ENCODE measurements at regions of chr1 and their contacts with region 1.

Region 1: GRCh38 chr1:3856908-3857790 is at the starts of genes CEP104 and DFFB:
- H3K4me3 Mint-ChIP-seq: peak within 1 kb of the TSS; percentile 97
- H3K27ac Mint-ChIP-seq: peak within 1 kb of the TSS; percentile 88
- H3K4me1 Mint-ChIP-seq: peaks cover 37% of the 10 kb centered on the region
- H3K27me3 Mint-ChIP-seq: no peaks in the 10 kb centered on the region

Region 2: GRCh38 chr1:3727042-3727824 is 129.9 kb before region 1 on chr1:
- intact Hi-C with region 1: no loop called
- H3K4me3 Mint-ChIP-seq: no peak overlapping the region
- H3K27ac Mint-ChIP-seq: no peak overlapping the region
- H3K4me1 Mint-ChIP-seq: no peaks in the 10 kb centered on the region
- H3K27me3 Mint-ChIP-seq: peaks cover 9% of the 10 kb centered on the region

Region 3: DNA sequence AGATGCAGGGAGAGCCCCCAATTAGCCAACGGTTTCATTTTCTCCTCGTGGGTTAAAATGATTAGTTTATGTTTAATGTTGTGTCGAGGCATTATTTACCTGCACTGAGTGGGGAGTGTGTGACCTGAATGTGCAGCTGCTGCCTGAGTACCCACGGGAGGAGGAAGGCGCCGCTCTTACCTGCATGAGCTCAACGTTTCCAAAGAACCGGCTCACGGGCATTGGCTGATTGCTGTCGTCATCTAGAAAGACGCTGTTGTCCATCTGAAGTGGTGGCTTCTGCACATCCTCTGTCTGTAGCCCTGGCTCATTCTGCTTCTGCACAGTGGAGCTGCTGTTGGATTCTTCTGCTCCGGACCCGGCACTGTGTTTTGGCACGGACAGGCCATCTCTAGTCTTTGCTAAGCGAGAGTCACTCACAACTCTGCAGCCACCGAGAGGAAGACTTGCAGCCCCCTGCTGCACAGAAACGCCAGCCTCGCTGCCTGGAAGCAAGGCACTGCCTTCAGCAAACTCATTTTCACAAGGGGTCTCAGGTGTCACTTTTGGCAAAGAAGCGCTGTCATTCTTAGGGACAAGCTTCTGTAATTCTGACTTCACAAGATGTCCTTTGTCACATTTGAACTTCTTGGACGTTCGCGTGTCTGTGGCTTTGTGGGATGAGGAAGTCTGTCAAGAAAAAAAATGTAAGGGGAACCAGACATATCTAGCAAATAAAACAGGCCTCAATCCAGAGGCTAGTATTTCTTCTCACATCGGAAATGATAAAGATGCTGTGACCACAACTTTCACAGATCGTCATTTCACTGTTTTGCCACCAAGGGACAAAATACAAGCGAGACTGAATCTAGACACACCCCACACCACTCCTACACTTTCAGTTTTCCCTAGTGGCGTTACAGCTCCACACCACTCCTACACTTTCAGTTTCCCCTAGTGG is 33.5 kb after region 1 on chr1:
- intact Hi-C with region 1: loop called (anchors 2 kb)
- H3K4me3 Mint-ChIP-seq: peak overlapping the region; percentile 23
- H3K27ac Mint-ChIP-seq: peak overlapping the region; percentile 74
- H3K4me1 Mint-ChIP-seq: peaks cover 44% of the 10 kb centered on the region
- H3K27me3 Mint-ChIP-seq: no peaks in the 10 kb centered on the region

Region 4: DNA sequence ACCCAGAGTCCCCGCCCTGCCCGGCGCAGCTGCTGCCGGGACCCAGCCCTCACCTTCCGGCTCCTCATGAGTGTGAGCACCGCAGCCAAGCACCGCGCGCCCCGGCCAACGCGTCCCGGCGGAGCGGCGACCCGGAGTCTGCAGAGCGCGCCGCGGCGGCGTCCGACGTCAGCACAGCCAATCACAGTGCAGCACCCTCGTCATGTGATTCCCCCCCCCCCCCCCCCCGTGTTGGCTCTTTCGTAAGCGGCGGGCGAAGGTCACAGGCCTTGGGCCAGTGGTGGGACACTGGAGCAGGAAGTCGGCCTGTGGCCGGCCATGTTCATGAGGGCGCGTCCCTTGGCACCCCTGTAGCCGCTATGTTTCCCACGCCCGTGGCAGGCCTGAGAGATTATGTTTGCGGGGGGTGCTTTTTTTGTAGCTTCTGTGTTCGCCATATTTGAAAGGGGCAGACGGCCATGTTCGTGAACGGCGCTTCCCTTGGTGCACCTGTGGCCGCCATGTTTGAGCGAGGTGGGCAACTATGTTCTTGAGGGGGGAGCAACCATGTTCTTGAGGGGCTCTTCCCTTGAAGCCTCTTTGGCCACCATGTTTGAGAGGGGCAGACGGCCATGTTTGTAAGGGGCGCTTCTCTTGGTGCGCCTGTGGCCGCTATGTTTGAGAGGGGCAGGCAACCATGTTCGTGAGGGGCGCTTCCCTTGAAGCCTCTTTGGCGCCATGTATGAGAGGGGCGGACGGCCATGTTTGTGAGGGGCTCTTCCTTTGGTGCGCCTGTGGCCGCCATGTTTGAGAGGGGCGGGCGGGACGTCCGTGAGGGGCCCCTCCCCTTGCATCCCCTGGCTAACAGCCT is 43.2 kb after region 1 on chr1 and contains the start of gene C1orf174:
- intact Hi-C with region 1: loop called (anchors 1 kb)
- H3K4me3 Mint-ChIP-seq: peak within 1 kb of the TSS; percentile 88
- H3K27ac Mint-ChIP-seq: peak within 1 kb of the TSS; percentile 99
- H3K4me1 Mint-ChIP-seq: peaks cover 48% of the 10 kb centered on the region
- H3K27me3 Mint-ChIP-seq: no peaks in the 10 kb centered on the region

Region 5: GRCh38 chr1:4564051-4564450 is 706.9 kb after region 1 on chr1:
- intact Hi-C with region 1: no loop called
- H3K4me3 Mint-ChIP-seq: no peak overlapping the region
- H3K27ac Mint-ChIP-seq: no peak overlapping the region
- H3K4me1 Mint-ChIP-seq: no peaks in the 10 kb centered on the region
- H3K27me3 Mint-ChIP-seq: peaks cover 5% of the 10 kb centered on the region

Measured in dendritic cell treated with granulocyte-macrophage colony-stimulating factor and Interleukin-4, amounts not matched to agents 40 ng/mL and 50 ng/mL, for 4 days (primary cell).